ENCODE measurements at regions of chr14 and their contacts with region 1.

Region 1: DNA sequence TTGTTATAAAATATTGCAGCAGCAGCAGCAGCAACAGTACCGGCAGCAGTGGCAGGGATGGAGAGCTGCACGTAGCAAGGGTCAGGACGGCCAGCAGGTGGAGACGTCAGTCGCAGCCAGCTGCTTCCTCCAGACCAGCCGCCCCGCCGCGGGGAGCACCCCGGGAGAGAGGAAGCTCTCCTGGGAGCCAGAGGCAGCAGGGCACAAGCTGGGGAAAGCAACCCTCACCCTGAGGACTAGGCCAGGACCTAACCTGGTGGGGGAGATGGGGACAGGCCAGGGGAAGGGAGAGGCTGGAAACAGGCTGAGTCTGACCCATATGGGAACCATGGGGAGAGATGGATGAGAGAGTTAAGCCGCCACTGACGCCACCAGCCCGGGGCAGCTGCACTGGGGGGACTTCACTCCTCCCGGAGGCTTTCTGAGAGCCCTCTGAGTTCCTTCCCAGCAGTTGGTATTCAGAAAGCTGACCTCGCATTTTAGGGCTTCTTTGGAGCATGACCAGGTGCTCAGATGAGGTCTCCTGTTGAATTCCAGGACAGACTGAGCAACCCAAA is 56.3 kb downstream of the SPTB start:
- DNase-seq: peak; percentile 82 to 86 (median 85)
- ATAC-seq: peak; percentile 94
- H3K4me3 ChIP-seq: no peak overlapping the region
- H3K27ac ChIP-seq: no peak overlapping the region
- H3K4me1 ChIP-seq: peaks cover 7% of the 10 kb centered on the region
- H3K27me3 ChIP-seq: no peaks in the 10 kb centered on the region
- CTCF ChIP-seq: peak; percentile 70 to 92 (median 86)
- POLR2A ChIP-seq: no peak

Region 2: GRCh38 chr14:64855721-64856528 is 32.5 kb after region 1 on chr14:
- intact Hi-C with region 1: no loop called
- DNase-seq: peak in 2 of 4 donors; percentile 4 to 44
- ATAC-seq: no peak
- H3K4me3 ChIP-seq: no peak overlapping the region
- H3K27ac ChIP-seq: no peak overlapping the region
- H3K4me1 ChIP-seq: no peaks in the 10 kb centered on the region
- H3K27me3 ChIP-seq: no peaks in the 10 kb centered on the region
- CTCF ChIP-seq: no peak
- POLR2A ChIP-seq: no peak

Region 3: DNA sequence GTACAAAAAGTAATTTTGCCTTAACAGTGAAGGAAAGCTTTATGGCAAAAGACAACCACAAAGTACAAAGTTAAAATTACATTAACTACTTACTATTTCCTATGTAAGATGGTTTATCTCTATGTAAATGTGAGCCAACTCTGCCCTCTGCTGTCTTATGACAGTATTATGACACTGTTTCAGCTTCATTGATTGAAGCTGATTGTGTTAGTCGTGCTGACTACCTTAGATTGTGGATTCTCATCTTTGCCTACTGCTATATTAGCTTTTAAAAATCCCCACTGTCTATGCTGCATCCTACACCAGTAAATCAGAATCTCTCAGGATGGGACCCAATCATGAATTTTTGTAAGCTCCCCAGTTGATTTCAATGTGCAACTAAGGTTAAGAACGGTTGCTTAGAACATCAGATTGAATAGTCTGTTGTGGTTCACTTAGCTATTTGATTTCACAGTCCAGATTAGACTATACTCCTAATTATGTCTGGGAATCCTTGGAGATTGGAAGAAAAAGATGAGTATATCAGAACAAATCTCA is 68.5 kb after region 1 on chr14:
- intact Hi-C with region 1: loop called (anchors 5 kb)
- DNase-seq: peak in 3 of 4 donors; percentile 21 to 64 (median 22)
- ATAC-seq: peak; percentile 80
- H3K4me3 ChIP-seq: no peak overlapping the region
- H3K27ac ChIP-seq: no peak overlapping the region
- H3K4me1 ChIP-seq: no peaks in the 10 kb centered on the region
- H3K27me3 ChIP-seq: no peaks in the 10 kb centered on the region
- CTCF ChIP-seq: peak in 6 of 7 experiments; percentile 34 to 82 (median 66)
- POLR2A ChIP-seq: no peak

Region 4: GRCh38 chr14:64971943-64972791 is 148.8 kb after region 1 on chr14 and contains the start of gene RAB15:
- intact Hi-C with region 1: loop called (anchors 10 kb)
- DNase-seq: peak; percentile 32 to 63 (median 42)
- ATAC-seq: peak; percentile 82
- H3K4me3 ChIP-seq: peak within 1 kb of the TSS; percentile 8 to 70
- H3K27ac ChIP-seq: peak within 1 kb of the TSS in 1 of 4 donors; percentile 48
- H3K4me1 ChIP-seq: peaks cover 17% of the 10 kb centered on the region
- H3K27me3 ChIP-seq: no peaks in the 10 kb centered on the region
- CTCF ChIP-seq: peak in 2 of 7 experiments; percentile 14 to 22
- POLR2A ChIP-seq: no peak
- total RNA-seq, gene RAB15: 10.1 to 19.8 TPM

Measured in body of pancreas (tissue), 4 donors.